MCF 10A (cell line): ENCODE measurements at regions of chr3 and their contacts with region 1.

Region 1: GRCh38 chr3:72722930-72723726 is 125.1 kb downstream of the SHQ1 start:
- DNase-seq: peak; percentile 85
- H3K4me3 Mint-ChIP-seq: peak overlapping the region; percentile 44
- H3K27ac Mint-ChIP-seq: peak overlapping the region; percentile 97
- H3K4me1 Mint-ChIP-seq: peaks cover 24% of the 10 kb centered on the region
- H3K27me3 Mint-ChIP-seq: no peaks in the 10 kb centered on the region
- CTCF ChIP-seq: no peak

Region 2: DNA sequence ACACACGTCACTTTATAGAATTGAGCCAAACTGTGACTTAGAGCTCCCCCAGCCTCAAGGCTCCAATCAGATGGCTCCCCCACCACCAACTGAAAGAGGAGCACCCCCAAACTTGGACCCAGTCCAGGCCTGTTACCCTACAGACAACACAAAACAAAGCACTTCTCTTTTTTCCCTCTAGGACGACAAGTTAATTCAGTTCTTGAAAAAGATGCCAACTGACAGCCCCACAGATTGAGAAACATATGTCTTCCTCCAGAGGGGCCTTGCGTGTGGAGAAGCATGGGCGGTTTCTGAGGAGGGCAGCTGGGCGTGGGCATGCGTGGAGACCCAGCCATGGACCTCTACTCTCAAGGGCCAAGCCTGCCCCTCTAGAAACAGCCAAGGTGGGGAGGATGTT is 104.4 kb before region 1 on chr3:
- CTCF ChIA-PET with region 1: no interaction called
- POLR2A ChIA-PET with region 1: no interaction called
- intact Hi-C with region 1: no loop called
- DNase-seq: no peak
- H3K4me3 Mint-ChIP-seq: no peak overlapping the region
- H3K27ac Mint-ChIP-seq: no peak overlapping the region
- H3K4me1 Mint-ChIP-seq: no peaks in the 10 kb centered on the region
- H3K27me3 Mint-ChIP-seq: no peaks in the 10 kb centered on the region
- CTCF ChIP-seq: no peak

Region 3: GRCh38 chr3:72753495-72753894 is 30.4 kb after region 1 on chr3:
- CTCF ChIA-PET with region 1: interaction called, 6 read pairs
- POLR2A ChIA-PET with region 1: interaction called, 32 read pairs
- intact Hi-C with region 1: no loop called
- DNase-seq: no peak
- H3K4me3 Mint-ChIP-seq: no peak overlapping the region
- H3K27ac Mint-ChIP-seq: no peak overlapping the region
- H3K4me1 Mint-ChIP-seq: peaks cover 19% of the 10 kb centered on the region
- H3K27me3 Mint-ChIP-seq: no peaks in the 10 kb centered on the region
- CTCF ChIP-seq: no peak

Region 4: DNA sequence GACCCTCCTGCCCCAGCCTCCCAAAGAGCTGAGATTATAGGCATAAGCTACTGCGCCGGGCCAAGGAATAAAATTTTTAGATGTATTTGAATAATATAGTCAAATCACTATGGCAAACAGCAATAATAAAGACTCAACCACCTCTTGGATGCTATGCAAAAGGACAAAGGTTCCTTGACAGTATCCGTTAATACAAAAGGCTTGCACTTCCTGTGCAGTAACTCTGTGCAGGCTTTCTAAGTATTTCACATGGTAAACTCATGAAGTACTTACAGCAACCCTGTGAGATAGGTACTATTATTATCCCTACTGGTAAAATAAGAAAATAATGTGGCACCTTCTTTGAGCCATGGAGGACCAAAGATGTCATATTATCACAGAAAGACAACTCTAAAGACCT is 38.3 kb after region 1 on chr3:
- CTCF ChIA-PET with region 1: no interaction called
- POLR2A ChIA-PET with region 1: interaction called, 10 read pairs
- intact Hi-C with region 1: no loop called
- DNase-seq: no peak
- H3K4me3 Mint-ChIP-seq: no peak overlapping the region
- H3K27ac Mint-ChIP-seq: no peak overlapping the region
- H3K4me1 Mint-ChIP-seq: no peaks in the 10 kb centered on the region
- H3K27me3 Mint-ChIP-seq: no peaks in the 10 kb centered on the region
- CTCF ChIP-seq: no peak